ENCODE measurements at regions of chr11 and their contacts with region 1.

Region 1: DNA sequence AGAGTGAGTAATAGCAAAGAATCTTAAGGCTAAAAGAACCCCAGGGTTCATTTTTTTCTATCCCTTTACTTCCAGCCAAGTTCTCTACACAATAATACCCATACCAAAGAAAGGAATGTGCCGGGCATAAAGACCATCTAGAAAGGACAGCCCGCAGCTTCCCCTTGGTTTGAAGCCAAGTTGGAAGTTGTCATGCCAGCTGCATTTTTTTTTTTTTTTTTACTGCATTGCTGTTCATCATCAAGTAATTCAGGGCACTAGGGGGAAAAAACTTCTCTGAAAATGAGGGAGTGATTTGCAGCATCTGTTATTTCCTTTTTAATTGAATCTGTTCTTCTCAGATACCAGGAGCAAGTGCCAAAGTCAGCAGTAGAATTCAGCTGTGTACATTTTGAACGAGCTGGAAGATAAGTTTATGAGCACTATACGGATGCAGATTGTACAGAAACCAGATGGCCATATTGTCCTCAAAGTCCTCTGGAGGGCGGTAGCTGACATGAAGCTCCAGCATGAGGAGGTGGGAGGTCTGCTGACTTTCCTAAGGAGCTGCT is 56.4 kb downstream of the UBASH3B start:
- DNase-seq: no peak
- ATAC-seq: 0 out of 2 replicates have a peak, but pooled peaks have one; percentile 29
- H3K4me3 ChIP-seq: no peak overlapping the region
- H3K27ac ChIP-seq: no peak overlapping the region
- H3K4me1 ChIP-seq: no peaks in the 10 kb centered on the region
- H3K27me3 ChIP-seq: no peaks in the 10 kb centered on the region
- CTCF ChIP-seq: no peak; the same call in 1 of the 2 replicates

Region 2: GRCh38 chr11:122572592-122572991 is 139.3 kb before region 1 on chr11:
- CTCF ChIA-PET with region 1: no interaction called
- POLR2A ChIA-PET with region 1: no interaction called
- in situ Hi-C with region 1: no loop called
- intact Hi-C with region 1: no loop called
- DNase-seq: no peak
- ATAC-seq: no peak
- H3K4me3 ChIP-seq: no peak overlapping the region
- H3K27ac ChIP-seq: no peak overlapping the region
- H3K4me1 ChIP-seq: no peaks in the 10 kb centered on the region
- H3K27me3 ChIP-seq: peaks cover 3% of the 10 kb centered on the region; the same call in 1 of the 2 replicates
- CTCF ChIP-seq: no peak

Region 3: DNA sequence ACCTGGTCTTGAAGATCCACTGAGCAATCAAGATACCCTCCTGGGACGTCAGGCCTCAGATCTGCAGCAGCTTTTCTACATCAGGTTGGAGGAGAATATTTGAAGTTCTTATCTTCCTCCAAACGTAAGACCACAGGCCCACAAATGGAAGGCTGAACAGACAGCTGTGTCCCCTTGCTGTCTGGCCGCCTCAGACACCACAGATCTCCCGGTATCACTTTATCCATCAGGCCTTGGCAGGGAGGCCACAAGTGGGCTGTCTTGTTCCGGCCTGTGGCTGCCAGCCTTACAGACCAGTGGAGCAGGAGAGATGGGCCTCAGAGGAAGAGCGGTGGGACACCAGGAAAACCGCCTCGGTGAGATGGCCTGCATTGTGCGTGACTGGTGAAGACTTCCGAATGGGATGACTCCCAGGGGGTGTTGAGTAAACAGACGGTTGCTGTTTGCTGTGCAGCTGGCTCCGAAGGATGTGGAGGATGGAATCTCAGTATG is 40.5 kb before region 1 on chr11:
- CTCF ChIA-PET with region 1: interaction called, 17 read pairs
- POLR2A ChIA-PET with region 1: no interaction called
- in situ Hi-C with region 1: no loop called
- intact Hi-C with region 1: no loop called
- DNase-seq: no peak
- ATAC-seq: no peak
- H3K4me3 ChIP-seq: no peak overlapping the region
- H3K27ac ChIP-seq: no peak overlapping the region
- H3K4me1 ChIP-seq: peaks cover 15% of the 10 kb centered on the region
- H3K27me3 ChIP-seq: no peaks in the 10 kb centered on the region
- CTCF ChIP-seq: no peak

Region 4: GRCh38 chr11:122743949-122744348 is 32.0 kb after region 1 on chr11:
- CTCF ChIA-PET with region 1: no interaction called
- POLR2A ChIA-PET with region 1: no interaction called
- in situ Hi-C with region 1: no loop called
- intact Hi-C with region 1: no loop called
- DNase-seq: no peak
- ATAC-seq: 0 out of 2 replicates have a peak, but pooled peaks have one; percentile 10
- H3K4me3 ChIP-seq: no peak overlapping the region
- H3K27ac ChIP-seq: no peak overlapping the region
- H3K4me1 ChIP-seq: no peaks in the 10 kb centered on the region; the same call in 1 of the 2 replicates
- H3K27me3 ChIP-seq: no peaks in the 10 kb centered on the region
- CTCF ChIP-seq: no peak